Activated CD4-positive, alpha-beta T cell treated with anti-CD3 and anti-CD28 coated beads, Interleukin-2, amount 10 ng/mL, durations not matched to agents 24 days and 14 days (primary cell): ENCODE measurements at regions of chr2 and their contacts with region 1.

Region 1: GRCh38 chr2:98771721-98772524 is 41.0 kb upstream of the MGAT4A start:
- DNase-seq: peak; percentile 91
- H3K4me3 Mint-ChIP-seq: peak overlapping the region; percentile 81
- H3K27ac Mint-ChIP-seq: peak overlapping the region; percentile 95
- H3K4me1 Mint-ChIP-seq: peaks cover 63% of the 10 kb centered on the region
- H3K27me3 Mint-ChIP-seq: no peaks in the 10 kb centered on the region

Region 2: DNA sequence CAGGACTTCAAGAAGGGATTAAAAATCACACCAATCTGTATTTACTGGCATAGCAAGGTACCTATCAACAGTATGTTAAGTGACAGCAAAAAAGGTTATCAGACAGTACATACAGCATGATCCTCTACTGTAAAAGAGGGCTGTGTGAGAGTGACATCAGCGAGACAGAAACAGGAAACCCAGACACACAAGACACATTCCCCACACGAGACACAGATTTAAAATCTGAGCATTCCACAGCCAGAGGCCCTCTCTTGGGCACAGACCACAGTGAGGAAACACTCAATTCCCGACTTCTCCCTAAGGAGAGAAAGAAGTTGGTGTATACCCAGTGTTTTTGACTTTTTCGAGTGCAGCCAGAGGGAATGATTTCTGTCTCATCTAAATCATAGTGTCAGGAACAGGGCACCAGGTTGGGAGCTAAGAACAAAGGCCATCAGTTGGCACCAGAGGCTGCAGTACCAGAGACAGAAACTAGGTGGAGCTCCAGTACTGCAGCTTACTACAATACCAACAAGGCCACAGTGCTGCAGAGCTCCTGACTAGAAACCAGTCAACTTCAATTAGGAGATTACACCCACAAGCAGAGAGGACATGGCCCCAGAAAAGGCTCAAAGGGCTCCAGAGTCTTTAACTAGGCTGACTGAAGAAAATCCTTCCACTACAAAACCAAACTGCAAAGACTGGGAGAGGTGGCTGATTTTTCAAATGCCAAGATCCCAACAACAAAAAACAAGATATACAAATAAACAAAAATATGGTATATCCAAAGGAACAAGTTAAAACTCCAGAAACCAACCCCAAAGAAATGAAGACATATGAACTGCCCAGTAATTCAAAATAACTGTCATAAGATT is 122.6 kb before region 1 on chr2:
- intact Hi-C with region 1: loop called (anchors 2 kb)
- DNase-seq: peak; percentile 94
- H3K4me3 Mint-ChIP-seq: no peak overlapping the region
- H3K27ac Mint-ChIP-seq: peak overlapping the region; percentile 48
- H3K4me1 Mint-ChIP-seq: peaks cover 47% of the 10 kb centered on the region
- H3K27me3 Mint-ChIP-seq: no peaks in the 10 kb centered on the region

Region 3: DNA sequence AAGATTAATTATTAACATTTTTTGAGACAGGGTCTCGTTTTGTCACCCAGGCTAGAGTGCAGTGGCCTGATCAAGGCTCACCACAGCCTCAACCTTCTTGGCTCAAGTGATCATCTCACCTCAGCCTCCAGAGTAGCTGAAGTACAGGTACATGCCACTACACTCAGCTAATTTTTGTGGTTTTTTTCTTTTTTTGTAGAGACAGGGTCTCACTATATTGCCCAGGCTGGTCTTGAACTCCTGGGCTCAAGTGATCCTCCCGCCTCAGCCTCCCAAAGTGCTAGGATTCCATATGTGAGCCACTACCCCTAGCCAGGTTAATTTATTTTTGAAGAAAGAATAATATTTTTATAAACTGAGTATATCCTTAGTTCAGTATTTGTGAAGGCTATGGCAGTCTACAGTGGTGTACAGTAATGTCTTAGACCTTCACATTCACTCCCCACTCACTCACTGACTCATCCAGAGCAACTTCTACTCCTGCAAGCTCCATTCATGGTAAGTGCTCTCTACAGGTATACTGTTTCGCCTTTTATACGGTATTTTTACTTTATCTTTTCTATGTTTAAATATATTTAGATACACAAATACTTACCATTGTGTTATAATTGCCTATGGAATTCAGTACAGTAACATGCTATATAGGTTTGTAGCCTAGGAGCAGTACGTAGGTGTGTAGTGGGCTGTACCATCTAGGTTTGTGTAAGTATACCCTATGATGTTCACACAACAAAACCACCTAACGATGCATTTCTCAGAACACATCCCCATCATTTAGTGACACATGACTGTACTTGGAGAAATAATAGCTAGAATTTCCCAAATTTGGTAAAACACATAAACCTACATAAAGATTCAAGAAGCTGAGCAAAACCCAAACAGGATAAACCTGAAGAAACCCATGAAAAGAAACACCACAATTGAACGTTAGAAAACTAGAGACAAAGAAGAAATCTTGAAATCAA is 79.6 kb before region 1 on chr2:
- intact Hi-C with region 1: loop called (anchors 1 kb)
- DNase-seq: no peak
- H3K4me3 Mint-ChIP-seq: peak overlapping the region; percentile 53
- H3K27ac Mint-ChIP-seq: peak overlapping the region; percentile 83
- H3K4me1 Mint-ChIP-seq: peaks cover 59% of the 10 kb centered on the region
- H3K27me3 Mint-ChIP-seq: no peaks in the 10 kb centered on the region

Region 4: GRCh38 chr2:98747888-98748287 is 24.0 kb before region 1 on chr2:
- intact Hi-C with region 1: no loop called
- DNase-seq: no peak
- H3K4me3 Mint-ChIP-seq: no peak overlapping the region
- H3K27ac Mint-ChIP-seq: no peak overlapping the region
- H3K4me1 Mint-ChIP-seq: peaks cover 38% of the 10 kb centered on the region
- H3K27me3 Mint-ChIP-seq: no peaks in the 10 kb centered on the region

Region 5: DNA sequence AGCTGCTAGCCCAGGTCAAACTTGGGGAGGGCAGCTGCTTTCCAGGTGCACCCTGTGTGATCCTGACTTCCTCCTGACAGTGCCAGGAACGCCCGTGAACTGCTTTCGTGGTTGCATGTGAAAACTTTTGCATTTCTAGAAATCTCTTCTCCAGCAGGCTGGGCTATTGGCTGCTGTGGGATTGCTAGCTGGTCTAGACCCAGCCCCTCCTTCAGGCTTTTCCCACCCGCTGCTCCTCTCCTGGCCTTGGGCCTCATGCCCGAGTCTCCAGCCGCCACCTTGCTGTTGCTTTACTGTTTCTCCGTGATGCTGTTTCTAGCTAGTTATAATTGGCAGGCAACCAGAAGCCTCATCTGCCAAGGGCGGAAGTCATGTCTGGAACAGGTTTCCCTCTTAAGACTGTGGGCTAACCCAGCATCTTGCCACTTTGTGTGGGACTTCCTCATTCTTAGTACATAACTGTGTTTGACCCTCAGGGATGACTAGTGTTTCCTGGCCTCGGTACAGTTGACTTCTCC is 14.0 kb before region 1 on chr2:
- intact Hi-C with region 1: loop called (anchors 1 kb)
- DNase-seq: peak; percentile 86
- H3K4me3 Mint-ChIP-seq: peak overlapping the region; percentile 78
- H3K27ac Mint-ChIP-seq: peak overlapping the region; percentile 94
- H3K4me1 Mint-ChIP-seq: peaks cover 54% of the 10 kb centered on the region
- H3K27me3 Mint-ChIP-seq: no peaks in the 10 kb centered on the region

Region 6: DNA sequence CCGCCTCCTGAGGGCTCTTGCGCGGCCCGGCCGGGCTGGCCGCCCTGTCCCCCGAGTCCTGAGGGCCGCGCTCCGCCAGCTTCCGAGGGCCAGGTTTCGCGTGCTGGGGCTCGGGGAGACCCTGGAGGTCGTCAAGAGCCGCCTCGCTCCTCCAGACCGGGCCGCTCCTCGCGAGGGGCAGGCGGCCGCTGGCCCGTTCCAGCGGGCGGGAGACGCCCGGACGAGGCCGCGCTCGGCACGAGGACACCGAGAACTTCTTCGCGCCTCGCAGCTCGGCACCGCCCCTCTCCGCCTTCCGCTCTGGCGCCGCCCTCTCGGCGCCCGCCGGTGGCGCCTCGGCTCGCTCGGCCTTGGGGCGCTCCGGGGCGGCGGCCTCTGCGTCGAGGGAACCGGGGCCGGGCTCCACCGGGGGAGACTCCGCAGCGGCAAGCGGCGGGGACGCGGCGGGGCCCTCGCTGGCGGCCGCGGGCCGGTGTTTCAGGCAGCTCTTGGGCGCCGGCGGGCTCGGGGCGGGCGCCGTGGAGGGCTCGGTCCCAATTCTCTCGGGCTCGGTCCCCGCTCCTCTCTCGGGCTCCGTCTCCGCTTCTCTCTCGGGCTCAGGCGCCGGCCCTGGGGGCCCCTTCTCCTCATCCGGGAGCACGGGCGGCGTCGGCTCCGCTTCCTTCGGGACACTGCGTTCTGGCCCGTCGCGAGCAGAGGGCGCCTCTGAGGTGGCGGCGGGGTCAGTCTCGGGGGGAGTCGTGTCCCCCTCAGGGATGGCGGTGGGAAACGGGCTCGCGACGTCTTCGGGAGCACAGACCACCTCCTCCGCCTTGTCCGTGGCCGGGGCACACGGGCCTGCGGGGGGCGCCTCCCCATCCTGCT is 50.6 kb after region 1 on chr2:
- intact Hi-C with region 1: loop called (anchors 2 kb)
- DNase-seq: peak; percentile 92
- H3K4me3 Mint-ChIP-seq: peak overlapping the region; percentile 74
- H3K27ac Mint-ChIP-seq: no peak overlapping the region
- H3K4me1 Mint-ChIP-seq: peaks cover 10% of the 10 kb centered on the region
- H3K27me3 Mint-ChIP-seq: peaks cover 5% of the 10 kb centered on the region

Region 7: DNA sequence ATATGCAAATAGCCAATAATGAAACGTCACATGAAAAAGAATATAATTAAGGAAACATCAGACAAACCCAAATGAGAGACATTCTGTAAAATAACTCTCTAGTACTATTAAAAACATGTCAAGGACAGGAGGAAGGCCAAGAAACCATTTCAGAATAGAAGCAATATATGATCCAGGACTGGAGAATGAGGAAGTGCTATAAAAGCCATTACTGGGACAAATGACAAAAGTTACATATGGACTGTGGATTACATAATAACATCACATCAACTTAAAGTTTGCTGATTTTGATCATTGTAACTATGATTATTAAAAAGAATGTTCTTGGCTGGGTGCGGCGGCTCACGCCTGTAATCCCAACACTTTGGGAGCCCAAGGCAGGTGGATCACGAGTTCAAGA is 82.8 kb after region 1 on chr2:
- intact Hi-C with region 1: no loop called
- DNase-seq: no peak
- H3K4me3 Mint-ChIP-seq: no peak overlapping the region
- H3K27ac Mint-ChIP-seq: no peak overlapping the region
- H3K4me1 Mint-ChIP-seq: peaks cover 2% of the 10 kb centered on the region
- H3K27me3 Mint-ChIP-seq: peaks cover 57% of the 10 kb centered on the region